ENCODE measurements at regions of chr5 and their contacts with region 1.

Region 1: DNA sequence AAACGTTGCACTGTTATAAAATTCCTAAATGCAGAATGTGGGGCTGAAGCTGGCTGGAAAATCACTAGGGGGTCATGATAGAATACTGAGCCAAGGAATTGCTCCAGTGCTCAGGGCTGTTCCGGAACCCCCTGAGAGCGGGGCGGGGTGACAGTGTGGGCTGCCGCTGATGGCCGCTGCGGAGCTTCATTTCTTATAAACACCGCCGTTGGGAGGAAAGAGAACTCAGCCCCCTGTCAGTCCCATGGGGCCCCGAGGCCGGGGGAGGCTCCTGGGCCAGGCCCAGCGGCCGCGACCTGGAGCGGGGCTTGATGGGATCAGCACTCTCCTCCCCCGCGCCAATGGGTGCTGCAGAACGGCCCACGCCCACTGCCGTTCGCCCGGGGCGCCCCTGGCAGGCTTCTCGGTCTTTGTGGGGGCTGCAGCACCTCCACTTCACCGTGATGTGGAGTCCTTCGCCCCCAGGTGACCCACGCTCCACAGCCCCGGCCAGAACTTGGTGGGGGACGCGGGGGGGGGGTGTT is 5.2 kb upstream of the IRF1 start:
- DNase-seq: no peak
- ATAC-seq: peak; percentile 69
- H3K4me3 ChIP-seq: peak overlapping the region; percentile 85
- H3K27ac ChIP-seq: peak overlapping the region; percentile 63
- H3K4me1 ChIP-seq: peaks cover 49% of the 10 kb centered on the region
- H3K27me3 ChIP-seq: no peaks in the 10 kb centered on the region
- CTCF ChIP-seq: 0 out of 6 replicates have a peak, but pooled peaks of 1 of the 3 experiments have one; percentile 7
- EP300 ChIP-seq: peak in 1 of 2 experiments; percentile 38; a peak in 2 of 4 replicates
- POLR2A ChIP-seq: peak; percentile 48; the same call in 1 of the 2 replicates
- RAD21 ChIP-seq: no peak

Region 2: DNA sequence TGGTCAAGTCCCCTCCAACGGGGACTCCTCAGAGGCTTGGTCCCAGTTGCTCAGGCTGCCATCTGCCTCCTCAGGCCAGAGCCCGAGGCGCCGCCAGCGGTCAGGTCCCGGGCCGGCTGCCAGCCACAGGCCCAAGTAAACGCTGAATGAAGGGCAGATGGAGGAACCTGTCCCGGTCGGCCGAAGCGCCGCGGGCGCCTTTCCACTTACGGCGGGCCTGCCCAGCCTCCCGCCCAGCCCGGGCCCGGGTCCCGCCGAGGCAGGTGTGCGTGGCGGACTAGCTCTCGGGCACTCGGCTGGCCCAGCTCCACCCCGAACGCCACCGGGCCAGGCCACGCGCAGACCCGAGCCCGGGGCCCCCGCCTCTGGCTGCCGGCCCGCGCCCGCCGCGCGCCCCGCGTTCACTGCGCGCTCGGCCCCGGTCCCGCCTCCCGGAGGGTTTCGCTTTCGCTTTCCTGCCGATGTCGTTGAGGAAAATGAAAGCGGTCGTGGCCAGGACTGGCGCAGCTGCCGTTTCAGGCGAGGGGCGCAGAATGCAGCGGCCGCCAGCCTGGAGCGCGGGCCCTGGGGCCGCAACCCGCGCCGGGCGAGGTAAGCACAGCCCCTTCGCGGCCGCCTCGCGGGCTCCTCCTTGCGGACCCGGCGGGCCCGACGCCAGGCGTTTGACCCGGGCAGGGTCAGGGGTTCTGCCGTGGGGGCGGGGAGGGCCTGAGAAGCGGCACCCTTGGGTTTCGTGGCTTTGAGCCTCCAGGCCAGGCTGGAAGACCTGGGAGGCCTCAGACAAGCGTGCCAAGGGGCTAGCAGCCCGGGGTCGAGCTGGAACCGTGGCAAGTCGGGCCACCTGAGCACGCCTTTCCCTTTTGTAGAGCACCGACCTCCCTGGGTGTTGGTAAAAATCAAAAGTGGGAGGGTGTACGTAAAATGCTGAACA is 85.0 kb before region 1 on chr5:
- CTCF ChIA-PET with region 1: interaction called, 30 read pairs
- POLR2A ChIA-PET with region 1: interaction called, 57 read pairs
- RAD21 ChIA-PET with region 1: interaction called, 121 read pairs
- SMC1A ChIA-PET with region 1: interaction called, 98 read pairs
- in situ Hi-C with region 1: no loop called
- intact Hi-C with region 1: no loop called
- DNase-seq: no peak
- ATAC-seq: peak; percentile 68
- H3K4me3 ChIP-seq: peak overlapping the region; percentile 89
- H3K27ac ChIP-seq: peak overlapping the region; percentile 95
- H3K4me1 ChIP-seq: peaks cover 11% of the 10 kb centered on the region
- H3K27me3 ChIP-seq: no peaks in the 10 kb centered on the region
- CTCF ChIP-seq: peak; percentile 54 to 67 (median 61)
- EP300 ChIP-seq: peak in 1 of 2 experiments; percentile 39; a peak in 1 of 4 replicates
- POLR2A ChIP-seq: peak; percentile 90
- RAD21 ChIP-seq: peak; percentile 51; the same call in 1 of the 2 replicates

Region 3: GRCh38 chr5:132426525-132427138 is 69.1 kb before region 1 on chr5:
- CTCF ChIA-PET with region 1: interaction called, 184 read pairs
- POLR2A ChIA-PET with region 1: interaction called, 389 read pairs
- RAD21 ChIA-PET with region 1: interaction called, 453 read pairs
- SMC1A ChIA-PET with region 1: interaction called, 162 read pairs
- in situ Hi-C with region 1: no loop called
- intact Hi-C with region 1: loop called (anchors 1 kb)
- DNase-seq: no peak
- ATAC-seq: peak; percentile 62
- H3K4me3 ChIP-seq: peak overlapping the region; percentile 49
- H3K27ac ChIP-seq: peak overlapping the region; percentile 94
- H3K4me1 ChIP-seq: peaks cover 90% of the 10 kb centered on the region
- H3K27me3 ChIP-seq: no peaks in the 10 kb centered on the region
- CTCF ChIP-seq: peak; percentile 47 to 56 (median 52)
- EP300 ChIP-seq: peak; percentile 17 to 67; a peak in 3 of 4 replicates
- POLR2A ChIP-seq: peak; percentile 88
- RAD21 ChIP-seq: peak; percentile 42; the same call in 1 of the 2 replicates

Region 4: GRCh38 chr5:132473019-132473531 is 22.7 kb before region 1 on chr5:
- CTCF ChIA-PET with region 1: interaction called, 51 read pairs
- POLR2A ChIA-PET with region 1: interaction called, 178 read pairs
- RAD21 ChIA-PET with region 1: interaction called, 64 read pairs
- SMC1A ChIA-PET with region 1: interaction called, 63 read pairs
- in situ Hi-C with region 1: no loop called
- intact Hi-C with region 1: no loop called
- DNase-seq: no peak
- ATAC-seq: peak; percentile 84
- H3K4me3 ChIP-seq: no peak overlapping the region
- H3K27ac ChIP-seq: peak overlapping the region; percentile 68
- H3K4me1 ChIP-seq: peaks cover 38% of the 10 kb centered on the region
- H3K27me3 ChIP-seq: no peaks in the 10 kb centered on the region
- CTCF ChIP-seq: no peak
- EP300 ChIP-seq: no peak
- POLR2A ChIP-seq: peak; percentile 38; the same call in 1 of the 2 replicates
- RAD21 ChIP-seq: no peak

Region 5: DNA sequence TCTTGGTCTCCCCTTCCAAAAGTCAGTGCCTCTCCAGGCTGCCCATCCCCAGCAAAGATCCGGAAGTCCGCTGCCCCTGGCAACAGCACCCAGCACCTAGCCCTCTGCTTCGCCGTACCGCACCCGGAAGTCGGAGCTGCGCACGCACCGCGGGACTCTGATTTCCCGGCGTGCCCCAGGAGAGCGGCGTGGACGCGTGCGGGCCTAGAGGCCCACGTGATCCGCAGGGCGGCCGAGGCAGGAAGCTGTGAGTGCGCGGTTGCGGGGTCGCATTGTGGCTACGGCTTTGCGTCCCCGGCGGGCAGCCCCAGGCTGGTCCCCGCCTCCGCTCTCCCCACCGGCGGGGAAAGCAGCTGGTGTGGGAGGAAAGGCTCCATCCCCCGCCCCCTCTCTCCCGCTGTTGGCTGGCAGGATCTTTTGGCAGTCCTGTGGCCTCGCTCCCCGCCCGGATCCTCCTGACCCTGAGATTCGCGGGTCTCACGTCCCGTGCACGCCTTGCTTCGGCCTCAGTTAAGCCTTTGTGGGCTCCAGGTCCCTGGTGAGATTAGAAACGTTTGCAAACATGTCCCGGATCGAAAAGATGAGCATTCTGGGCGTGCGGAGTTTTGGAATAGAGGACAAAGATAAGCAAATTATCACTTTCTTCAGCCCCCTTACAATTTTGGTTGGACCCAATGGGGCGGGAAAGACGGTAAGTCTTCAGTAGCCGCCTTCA is 61.2 kb after region 1 on chr5 and contains the start of gene RAD50:
- CTCF ChIA-PET with region 1: interaction called, 3 read pairs
- POLR2A ChIA-PET with region 1: interaction called, 10 read pairs
- RAD21 ChIA-PET with region 1: no interaction called
- SMC1A ChIA-PET with region 1: no interaction called
- in situ Hi-C with region 1: no loop called
- intact Hi-C with region 1: no loop called
- DNase-seq: peak; percentile 86
- ATAC-seq: peak; percentile 99
- H3K4me3 ChIP-seq: peak within 1 kb of the TSS; percentile 88
- H3K27ac ChIP-seq: peak within 1 kb of the TSS; percentile 96
- H3K4me1 ChIP-seq: no peaks in the 10 kb centered on the region; the same call in 1 of the 2 replicates
- H3K27me3 ChIP-seq: no peaks in the 10 kb centered on the region
- CTCF ChIP-seq: no peak
- EP300 ChIP-seq: no peak
- POLR2A ChIP-seq: peak; percentile 99
- RAD21 ChIP-seq: no peak
- polyA plus RNA-seq, gene RAD50: 12.8 to 19.5 TPM

Measured in GM12878 (cell line).